ENCODE measurements at regions of chr11 and their contacts with region 1.

Region 1: DNA sequence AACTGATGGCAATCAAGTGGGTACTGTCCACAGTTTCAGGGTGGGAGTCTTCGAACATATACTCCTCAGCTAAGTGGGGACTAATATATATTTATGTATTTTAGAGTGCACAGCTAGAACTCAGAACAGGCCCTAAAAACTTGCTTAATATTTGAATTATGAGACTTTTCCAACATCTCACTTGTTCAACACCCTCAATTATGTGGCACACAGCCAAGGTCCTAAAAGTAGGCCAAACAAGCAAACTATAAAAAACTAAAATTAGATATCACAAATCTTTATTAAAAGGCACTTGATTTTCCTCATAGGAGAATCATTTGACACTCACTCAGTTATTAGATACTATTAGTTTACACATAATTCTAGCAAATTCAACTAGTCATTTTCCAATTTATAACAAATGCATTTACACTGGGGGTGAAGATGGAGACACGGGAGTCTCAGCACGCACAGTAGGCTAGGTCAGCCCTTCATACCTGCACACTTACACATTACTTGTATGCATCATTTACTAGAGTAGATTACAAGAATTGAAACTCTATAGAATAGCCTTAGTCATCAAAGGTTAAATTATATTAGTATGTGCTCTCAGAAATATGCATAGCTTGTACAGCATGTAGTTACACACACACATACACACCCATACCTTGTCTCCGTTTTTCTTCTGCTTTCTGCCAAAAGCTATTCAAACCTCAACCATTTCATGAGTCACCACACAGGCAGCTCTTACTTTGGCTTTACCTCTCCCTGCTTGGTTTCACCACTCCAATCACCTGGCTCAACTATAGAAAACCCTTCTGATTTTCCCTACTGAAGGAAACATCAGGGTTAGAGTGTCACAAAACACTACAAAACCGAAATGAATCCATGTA is 171.5 kb downstream of the SBF2 start:
- DNase-seq: no peak
- ATAC-seq: no peak
- H3K4me3 ChIP-seq: no peak overlapping the region
- H3K27ac ChIP-seq: no peak overlapping the region
- H3K4me1 ChIP-seq: no peaks in the 10 kb centered on the region
- H3K27me3 ChIP-seq: peaks cover 0 to 4% of the 10 kb centered on the region in 2 experiments; a peak in 1 of 5 replicates
- CTCF ChIP-seq: no peak
- EP300 ChIP-seq: no peak
- POLR2A ChIP-seq: no peak
- RAD21 ChIP-seq: no peak

Region 2: DNA sequence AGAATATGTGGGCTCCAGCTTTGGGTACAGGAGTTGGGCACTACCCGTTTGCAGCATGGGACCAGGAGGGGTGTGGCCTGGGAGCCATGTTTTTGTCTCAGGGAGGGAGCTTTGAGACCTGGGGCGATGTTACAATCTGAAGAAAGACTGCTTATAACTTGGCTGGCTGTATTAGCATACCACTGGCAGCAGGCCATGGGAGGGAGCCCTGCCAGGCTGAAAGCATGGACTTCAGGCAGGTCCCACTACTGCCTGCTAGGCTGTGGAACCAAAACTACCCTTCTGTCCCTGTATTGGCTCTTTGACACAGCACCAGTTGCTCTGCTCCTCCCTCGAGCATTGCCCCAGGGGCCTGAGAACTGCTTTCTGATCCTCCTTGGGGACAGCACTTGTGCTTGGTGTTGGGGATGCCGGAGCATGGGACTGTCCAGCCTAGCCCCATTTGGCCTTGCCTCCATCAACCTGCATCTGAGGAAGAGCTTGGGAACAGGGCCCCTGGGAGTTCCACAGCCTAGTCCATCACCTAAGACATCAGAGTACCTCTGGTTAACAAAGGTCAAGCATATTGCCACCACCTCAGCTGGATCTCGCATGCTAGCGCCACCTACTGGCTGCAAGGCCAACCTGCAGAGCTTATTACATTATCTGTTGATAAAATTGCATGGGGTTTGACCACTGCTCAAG is 46.0 kb before region 1 on chr11:
- CTCF ChIA-PET with region 1: no interaction called
- POLR2A ChIA-PET with region 1: no interaction called
- in situ Hi-C with region 1: no loop called
- intact Hi-C with region 1: no loop called
- DNase-seq: peak; percentile 62 to 69 (median 63)
- ATAC-seq: peak; percentile 94
- H3K4me3 ChIP-seq: no peak overlapping the region
- H3K27ac ChIP-seq: no peak overlapping the region
- H3K4me1 ChIP-seq: no peaks in the 10 kb centered on the region
- H3K27me3 ChIP-seq: no peaks in the 10 kb centered on the region
- CTCF ChIP-seq: peak; percentile 80 to 86 (median 86)
- EP300 ChIP-seq: no peak
- POLR2A ChIP-seq: no peak
- RAD21 ChIP-seq: peak; percentile 17 to 74; a peak in 2 of 4 replicates

Region 3: DNA sequence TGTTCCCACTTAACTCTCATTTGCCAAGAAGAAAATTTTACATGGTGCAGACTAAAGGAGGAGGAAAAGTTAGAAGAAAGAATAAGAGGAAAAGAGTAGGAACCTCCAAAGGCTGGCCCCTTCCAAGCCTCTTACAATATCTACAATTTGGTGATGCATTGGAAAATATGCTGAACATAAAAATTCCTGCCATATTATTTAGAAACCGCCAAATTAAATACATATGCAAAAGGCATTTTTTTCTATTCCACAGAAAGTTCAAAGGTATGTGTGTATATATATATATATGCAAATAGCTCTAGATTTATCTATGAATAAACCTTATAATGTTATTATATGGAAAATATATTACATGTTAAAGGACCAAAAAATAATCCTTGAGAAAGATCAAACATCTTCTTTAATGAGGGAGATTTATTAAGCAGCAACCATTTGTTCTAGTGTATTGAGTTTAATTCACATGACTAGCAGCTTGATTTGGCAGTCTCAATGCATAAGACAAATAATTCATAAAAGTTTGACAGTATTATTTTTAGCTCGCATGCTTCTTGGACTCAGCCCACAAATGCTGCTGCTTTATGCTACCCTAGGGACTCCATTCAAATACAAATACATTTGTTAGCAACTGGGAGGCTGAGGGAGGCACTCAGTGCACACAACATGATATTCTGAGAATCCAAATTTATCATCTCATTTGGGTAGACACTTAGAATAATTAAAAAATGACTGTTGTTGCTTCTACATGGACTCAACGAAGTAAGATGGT is 13.5 kb before region 1 on chr11:
- CTCF ChIA-PET with region 1: no interaction called
- POLR2A ChIA-PET with region 1: no interaction called
- in situ Hi-C with region 1: no loop called
- intact Hi-C with region 1: no loop called
- DNase-seq: no peak
- ATAC-seq: no peak
- H3K4me3 ChIP-seq: no peak overlapping the region
- H3K27ac ChIP-seq: no peak overlapping the region
- H3K4me1 ChIP-seq: no peaks in the 10 kb centered on the region
- H3K27me3 ChIP-seq: peaks cover 0 to 4% of the 10 kb centered on the region in 2 experiments; a peak in 2 of 5 replicates
- CTCF ChIP-seq: no peak
- EP300 ChIP-seq: no peak
- POLR2A ChIP-seq: no peak
- RAD21 ChIP-seq: no peak

Region 4: DNA sequence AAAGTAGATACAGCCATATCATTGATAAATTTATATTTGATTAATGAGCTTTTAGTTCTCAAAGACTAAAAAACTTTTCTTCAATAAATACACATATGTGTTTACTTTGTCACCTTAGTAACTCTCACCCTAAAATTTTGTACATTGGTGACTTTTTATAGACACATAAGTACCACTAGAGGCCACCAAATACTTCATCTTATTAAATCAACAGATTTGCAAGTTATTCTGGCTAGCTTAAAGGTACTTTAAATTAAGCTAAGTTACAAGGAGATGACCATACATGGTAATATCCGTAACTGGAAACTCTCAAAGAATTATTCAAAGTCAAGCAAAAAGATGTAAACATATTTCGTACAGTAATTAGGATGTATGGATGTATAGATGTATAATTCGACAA is 59.2 kb after region 1 on chr11:
- CTCF ChIA-PET with region 1: no interaction called
- POLR2A ChIA-PET with region 1: no interaction called
- in situ Hi-C with region 1: no loop called
- intact Hi-C with region 1: loop called (anchors 10 kb)
- DNase-seq: no peak
- ATAC-seq: no peak
- H3K4me3 ChIP-seq: no peak overlapping the region
- H3K27ac ChIP-seq: no peak overlapping the region
- H3K4me1 ChIP-seq: no peaks in the 10 kb centered on the region; a peak in 1 of 5 replicates
- H3K27me3 ChIP-seq: no peaks in the 10 kb centered on the region
- CTCF ChIP-seq: peak in 1 of 3 experiments; percentile 34; a peak in 2 of 6 replicates
- EP300 ChIP-seq: no peak
- POLR2A ChIP-seq: no peak
- RAD21 ChIP-seq: no peak; a peak in 1 of 4 replicates